Ovary (tissue), 10 donors: ENCODE measurements at regions of chr1 and their contacts with region 1.

Region 1: GRCh38 chr1:59520827-59521418 is 224.0 kb downstream of the FGGY start:
- DNase-seq: peak; percentile 70 to 82 (median 76)
- H3K4me3 ChIP-seq: no peak overlapping the region
- H3K27ac ChIP-seq: peak overlapping the region; percentile 13 to 72
- H3K4me1 ChIP-seq: peaks cover 8% of the 10 kb centered on the region
- H3K27me3 ChIP-seq: no peaks in the 10 kb centered on the region
- CTCF ChIP-seq: peak in 1 of 3 donors; percentile 15
- EP300 ChIP-seq: no peak
- POLR2A ChIP-seq: no peak

Region 2: GRCh38 chr1:59625384-59625783 is 104.5 kb after region 1 on chr1:
- intact Hi-C with region 1: no loop called
- DNase-seq: no peak
- H3K4me3 ChIP-seq: no peak overlapping the region
- H3K27ac ChIP-seq: no peak overlapping the region
- H3K4me1 ChIP-seq: no peaks in the 10 kb centered on the region
- H3K27me3 ChIP-seq: no peaks in the 10 kb centered on the region
- CTCF ChIP-seq: no peak
- EP300 ChIP-seq: no peak
- POLR2A ChIP-seq: no peak

Region 3: DNA sequence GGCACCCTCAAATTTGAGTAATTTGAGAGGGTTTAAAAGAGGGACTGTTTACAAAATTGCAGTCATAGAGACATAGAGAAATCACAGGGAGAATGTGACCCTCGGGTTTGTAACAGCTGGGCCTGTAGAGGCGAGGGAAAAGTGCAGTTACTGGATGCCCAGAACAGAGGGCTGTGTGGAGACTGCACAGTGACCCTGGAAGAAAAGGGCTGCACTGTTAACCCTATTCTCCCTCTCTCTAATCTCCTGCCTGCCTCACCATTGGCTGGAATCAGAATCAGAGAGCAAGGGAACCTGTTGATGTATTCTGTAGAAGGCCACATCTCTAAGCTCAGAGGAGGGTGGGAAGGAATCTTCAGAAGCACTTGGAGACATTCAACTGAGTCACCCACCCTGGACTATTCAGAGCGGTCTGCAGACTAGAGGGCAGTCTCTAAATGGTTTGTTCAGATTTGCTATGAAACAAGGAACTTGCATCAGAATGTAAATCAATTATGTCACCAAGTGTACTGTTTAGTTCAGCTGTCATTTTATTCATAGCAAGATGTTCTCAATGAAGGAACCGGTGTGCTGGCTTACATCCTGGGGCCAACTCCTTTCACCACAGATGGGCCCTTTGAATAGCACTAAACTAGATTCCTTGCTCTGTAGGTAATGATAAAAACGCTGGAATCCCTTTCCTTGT is 161.6 kb after region 1 on chr1:
- intact Hi-C with region 1: loop called in 1 of 4 experiments (anchors 10 kb)
- DNase-seq: no peak
- H3K4me3 ChIP-seq: no peak overlapping the region
- H3K27ac ChIP-seq: no peak overlapping the region
- H3K4me1 ChIP-seq: peaks cover 9% of the 10 kb centered on the region
- H3K27me3 ChIP-seq: no peaks in the 10 kb centered on the region
- CTCF ChIP-seq: no peak
- EP300 ChIP-seq: no peak
- POLR2A ChIP-seq: no peak

Region 4: DNA sequence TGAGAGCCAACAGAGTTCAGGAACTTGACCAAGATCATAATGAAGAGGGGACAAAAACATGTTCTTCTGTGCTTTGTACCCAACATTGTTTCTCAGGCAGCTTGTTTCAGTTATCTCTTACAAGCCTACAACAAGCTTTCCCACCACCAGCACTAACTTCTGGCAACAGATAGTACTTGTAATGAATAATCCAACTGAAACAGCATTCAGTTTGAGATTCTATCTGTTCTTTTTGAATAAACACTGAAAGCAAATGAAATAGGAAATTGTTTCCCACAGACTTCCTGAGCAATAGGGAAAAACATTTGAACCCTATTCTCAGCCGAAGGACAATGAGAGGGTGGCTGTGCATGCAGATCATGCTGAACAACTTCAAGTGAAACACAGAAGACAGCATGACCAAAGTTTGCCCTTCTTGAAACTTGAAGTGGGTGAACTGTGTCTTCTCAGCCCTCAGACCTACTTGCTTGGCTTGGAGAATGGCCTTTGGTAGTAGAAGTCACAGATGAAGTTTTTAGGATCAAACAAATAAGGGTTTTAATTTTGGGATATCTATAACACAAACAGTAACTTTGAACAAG is 282.6 kb after region 1 on chr1:
- intact Hi-C with region 1: no loop called
- DNase-seq: no peak
- H3K4me3 ChIP-seq: no peak overlapping the region
- H3K27ac ChIP-seq: no peak overlapping the region
- H3K4me1 ChIP-seq: no peaks in the 10 kb centered on the region
- H3K27me3 ChIP-seq: no peaks in the 10 kb centered on the region
- CTCF ChIP-seq: no peak
- EP300 ChIP-seq: no peak
- POLR2A ChIP-seq: no peak